Sigmoid colon (tissue), 7 donors: ENCODE measurements at regions of chr17 and their contacts with region 1.

Region 1: GRCh38 chr17:32142038-32142856 is at the start of gene RHOT1:
- DNase-seq: peak; percentile 87
- H3K4me3 ChIP-seq: peak within 1 kb of the TSS; percentile 69 to 96 (median 88)
- H3K27ac ChIP-seq: peak within 1 kb of the TSS; percentile 87 to 97 (median 92)
- H3K4me1 ChIP-seq: peaks cover 0 to 41% (median 31%) of the 10 kb centered on the region in 4 donors
- H3K27me3 ChIP-seq: no peaks in the 10 kb centered on the region
- CTCF ChIP-seq: peak in 3 of 4 experiments; percentile 34 to 58 (median 56)
- EP300 ChIP-seq: no peak
- POLR2A ChIP-seq: no peak
- total RNA-seq, gene RHOT1: 48.9 to 71.5 (median 58.0) TPM

Region 2: GRCh38 chr17:32006957-32007462 is 135.2 kb before region 1 on chr17 and contains the start of gene LRRC37B:
- intact Hi-C with region 1: loop called (anchors 2 kb)
- DNase-seq: peak; percentile 92
- H3K4me3 ChIP-seq: peak within 1 kb of the TSS; percentile 52 to 96 (median 78)
- H3K27ac ChIP-seq: peak within 1 kb of the TSS; percentile 78 to 93 (median 86)
- H3K4me1 ChIP-seq: peaks cover 0 to 26% (median 25%) of the 10 kb centered on the region in 4 donors
- H3K27me3 ChIP-seq: no peaks in the 10 kb centered on the region
- CTCF ChIP-seq: peak; percentile 80 to 94 (median 88)
- EP300 ChIP-seq: no peak
- POLR2A ChIP-seq: peak in 1 of 2 donors; percentile 13
- total RNA-seq, gene LRRC37B: 14.0 to 44.9 (median 17.6) TPM